PC-9 (cell line): ENCODE measurements at regions of chr2 and their contacts with region 1.

Region 1: GRCh38 chr2:20496081-20496876 is 49.4 kb downstream of the RHOB start:
- DNase-seq: peak; percentile 92 to 99
- H3K4me3 ChIP-seq: peak overlapping the region; percentile 33; the same call in 1 of the 2 replicates
- H3K27ac ChIP-seq: peak overlapping the region; percentile 84
- H3K4me1 ChIP-seq: peaks cover 66% of the 10 kb centered on the region
- H3K27me3 ChIP-seq: no peaks in the 10 kb centered on the region
- CTCF ChIP-seq: no peak

Region 2: DNA sequence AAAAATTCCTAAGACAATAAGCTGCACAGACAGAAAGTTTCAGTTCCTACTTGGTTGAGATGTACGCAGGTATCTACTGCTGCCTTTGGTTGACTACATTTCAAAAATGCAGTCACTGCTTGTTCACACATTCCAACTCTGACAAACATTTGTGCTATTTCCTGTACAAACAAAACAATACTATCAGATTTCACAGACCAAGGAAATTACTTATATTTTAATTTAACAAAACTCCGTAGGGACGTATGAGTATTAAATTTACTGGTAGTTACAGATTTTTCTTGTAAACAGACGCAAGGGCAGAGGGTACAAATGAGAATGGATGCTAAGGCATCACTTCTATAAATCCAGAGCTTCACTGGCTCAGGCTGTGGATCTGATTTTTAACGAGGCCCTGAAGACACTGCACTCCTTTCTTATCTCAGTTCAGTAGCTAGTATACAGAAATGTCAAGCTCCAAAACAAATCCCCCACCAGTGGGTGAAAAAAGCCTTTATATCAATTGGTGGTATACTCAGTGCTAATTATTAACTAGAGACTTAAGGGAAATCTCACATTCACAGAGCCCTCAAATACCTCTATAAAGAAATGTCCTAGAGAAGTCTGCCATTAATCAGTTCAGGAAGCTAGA is 562.8 kb before region 1 on chr2:
- CTCF ChIA-PET with region 1: no interaction called
- POLR2A ChIA-PET with region 1: no interaction called
- intact Hi-C with region 1: no loop called
- DNase-seq: peak; percentile 33 to 95
- H3K4me3 ChIP-seq: peak overlapping the region; percentile 48
- H3K27ac ChIP-seq: peak overlapping the region; percentile 97
- H3K4me1 ChIP-seq: peaks cover 35% of the 10 kb centered on the region
- H3K27me3 ChIP-seq: no peaks in the 10 kb centered on the region
- CTCF ChIP-seq: 0 out of 2 replicates have a peak, but pooled peaks have one; percentile 13

Region 3: DNA sequence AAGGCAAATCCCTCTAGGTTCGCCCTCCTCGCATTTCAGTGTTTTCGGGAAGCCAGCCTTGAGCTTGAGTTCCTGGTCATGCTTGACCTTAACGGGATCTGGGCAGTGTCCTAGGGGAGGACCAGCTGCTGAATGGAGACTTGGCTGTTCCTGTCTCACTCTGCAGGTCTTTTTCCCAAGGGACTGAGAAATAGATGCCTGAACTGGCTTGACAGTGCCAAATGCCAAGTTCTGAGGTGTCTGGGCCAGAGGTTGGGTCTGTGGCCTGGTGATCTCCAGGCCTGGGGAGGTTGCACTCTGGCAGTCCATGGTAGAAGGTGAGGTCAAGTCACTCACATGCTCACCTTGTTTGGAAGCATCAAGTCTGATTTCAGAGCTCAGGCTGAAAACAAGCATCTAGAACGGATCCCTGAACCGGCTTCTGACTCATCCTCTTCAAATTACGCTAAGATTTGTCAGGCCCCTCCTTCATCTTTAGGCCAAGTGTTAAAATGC is 29.8 kb before region 1 on chr2:
- CTCF ChIA-PET with region 1: no interaction called
- POLR2A ChIA-PET with region 1: interaction called, 6 read pairs
- intact Hi-C with region 1: loop called (anchors 1 kb)
- DNase-seq: peak; percentile 48 to 92
- H3K4me3 ChIP-seq: peak overlapping the region; percentile 7; the same call in 1 of the 2 replicates
- H3K27ac ChIP-seq: peak overlapping the region; percentile 88
- H3K4me1 ChIP-seq: peaks cover 48% of the 10 kb centered on the region
- H3K27me3 ChIP-seq: no peaks in the 10 kb centered on the region
- CTCF ChIP-seq: no peak

Region 4: DNA sequence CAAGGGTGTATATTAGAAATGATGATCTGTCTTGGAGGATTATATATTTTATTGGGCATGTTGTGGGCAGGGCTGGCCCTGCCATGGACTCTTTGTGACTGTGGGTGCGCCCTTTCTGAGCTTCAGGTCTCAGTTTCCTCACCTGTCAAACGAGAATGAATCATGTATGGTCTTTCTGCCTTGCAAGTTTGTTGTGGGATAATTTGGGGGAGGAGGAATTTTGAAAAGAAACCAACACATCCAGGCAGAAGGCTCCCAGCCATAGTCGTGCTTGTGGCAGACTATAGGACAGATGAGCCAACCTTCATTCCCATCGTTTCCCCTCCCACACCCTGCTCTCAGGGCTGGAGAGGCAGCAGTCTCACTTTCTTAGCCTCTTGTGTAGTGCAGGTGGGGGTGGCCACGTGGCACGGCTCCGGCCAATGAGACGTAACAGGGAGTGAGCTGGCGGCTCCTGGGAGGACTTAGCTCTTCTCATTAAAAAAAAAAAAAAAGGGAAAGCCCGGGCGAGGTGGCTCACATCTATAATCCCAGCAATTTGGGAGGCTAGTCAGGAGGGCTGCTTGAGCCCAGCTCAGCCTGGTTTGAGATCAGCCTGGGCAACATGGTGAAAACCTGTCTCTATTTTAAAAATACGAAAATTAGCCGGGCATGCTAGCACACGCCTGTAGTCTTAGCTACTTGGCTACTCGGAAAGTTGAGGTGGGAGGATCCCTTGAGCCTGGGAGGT is 13.7 kb after region 1 on chr2:
- CTCF ChIA-PET with region 1: no interaction called
- POLR2A ChIA-PET with region 1: interaction called, 11 read pairs
- intact Hi-C with region 1: loop called (anchors 1 kb)
- DNase-seq: peak; percentile 37 to 76
- H3K4me3 ChIP-seq: no peak overlapping the region
- H3K27ac ChIP-seq: no peak overlapping the region
- H3K4me1 ChIP-seq: peaks cover 10% of the 10 kb centered on the region
- H3K27me3 ChIP-seq: no peaks in the 10 kb centered on the region
- CTCF ChIP-seq: no peak

Region 5: GRCh38 chr2:20578895-20579825 is 82.9 kb after region 1 on chr2:
- CTCF ChIA-PET with region 1: no interaction called
- POLR2A ChIA-PET with region 1: no interaction called
- intact Hi-C with region 1: loop called (anchors 1 kb)
- DNase-seq: peak; percentile 76 to 89
- H3K4me3 ChIP-seq: no peak overlapping the region
- H3K27ac ChIP-seq: peak overlapping the region; percentile 94
- H3K4me1 ChIP-seq: peaks cover 64% of the 10 kb centered on the region
- H3K27me3 ChIP-seq: no peaks in the 10 kb centered on the region
- CTCF ChIP-seq: no peak

Region 6: GRCh38 chr2:20595431-20596192 is 99.3 kb after region 1 on chr2:
- CTCF ChIA-PET with region 1: no interaction called
- POLR2A ChIA-PET with region 1: interaction called, 13 read pairs
- intact Hi-C with region 1: loop called (anchors 1 kb)
- DNase-seq: peak; percentile 25 to 92
- H3K4me3 ChIP-seq: peak overlapping the region; percentile 5; the same call in 1 of the 2 replicates
- H3K27ac ChIP-seq: peak overlapping the region; percentile 96
- H3K4me1 ChIP-seq: peaks cover 76% of the 10 kb centered on the region
- H3K27me3 ChIP-seq: no peaks in the 10 kb centered on the region
- CTCF ChIP-seq: no peak; the same call in 1 of the 2 replicates

Region 7: GRCh38 chr2:20635675-20636584 is 139.7 kb after region 1 on chr2:
- CTCF ChIA-PET with region 1: no interaction called
- POLR2A ChIA-PET with region 1: no interaction called
- intact Hi-C with region 1: loop called (anchors 1 kb)
- DNase-seq: peak; percentile 48 to 86
- H3K4me3 ChIP-seq: no peak overlapping the region
- H3K27ac ChIP-seq: no peak overlapping the region
- H3K4me1 ChIP-seq: peaks cover 37% of the 10 kb centered on the region
- H3K27me3 ChIP-seq: no peaks in the 10 kb centered on the region
- CTCF ChIP-seq: peak; percentile 96

Region 8: DNA sequence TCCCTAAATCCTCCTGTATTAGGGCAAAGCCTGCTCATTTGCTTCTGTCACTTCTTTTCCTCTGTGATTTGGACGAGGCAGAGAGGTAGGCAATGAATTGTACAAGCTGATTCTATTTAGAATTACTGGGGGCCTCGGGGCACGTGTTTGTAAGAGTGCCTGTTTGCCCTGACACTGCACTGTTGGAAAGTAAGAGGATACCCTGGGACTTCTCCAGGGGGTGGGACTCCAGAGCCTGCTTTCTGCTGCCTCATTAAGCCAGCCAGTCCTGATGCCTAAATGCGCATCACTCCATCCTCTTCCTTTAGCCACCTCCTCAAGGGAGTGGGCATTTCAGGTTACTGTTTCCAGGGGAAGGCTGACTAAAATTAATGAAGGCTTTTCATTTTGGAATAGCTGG is 761.8 kb after region 1 on chr2:
- CTCF ChIA-PET with region 1: no interaction called
- POLR2A ChIA-PET with region 1: no interaction called
- intact Hi-C with region 1: no loop called
- DNase-seq: no peak
- H3K4me3 ChIP-seq: no peak overlapping the region
- H3K27ac ChIP-seq: no peak overlapping the region
- H3K4me1 ChIP-seq: no peaks in the 10 kb centered on the region
- H3K27me3 ChIP-seq: peaks cover 12% of the 10 kb centered on the region; the same call in 1 of the 2 replicates
- CTCF ChIP-seq: no peak

Region 9: GRCh38 chr2:21772624-21773023 is 1276.3 kb after region 1 on chr2:
- CTCF ChIA-PET with region 1: no interaction called
- POLR2A ChIA-PET with region 1: no interaction called
- intact Hi-C with region 1: no loop called
- DNase-seq: no peak
- H3K4me3 ChIP-seq: no peak overlapping the region
- H3K27ac ChIP-seq: no peak overlapping the region
- H3K4me1 ChIP-seq: no peaks in the 10 kb centered on the region
- H3K27me3 ChIP-seq: no peaks in the 10 kb centered on the region
- CTCF ChIP-seq: no peak